Left ventricle myocardium inferior (tissue), 1 donor: ENCODE measurements at regions of chr1 and their contacts with region 1.

Region 1: GRCh38 chr1:245822987-245823386 is 668.2 kb downstream of the KIF26B start:
- DNase-seq: no peak
- H3K4me3 ChIP-seq: no peak overlapping the region
- H3K27ac ChIP-seq: no peak overlapping the region
- H3K4me1 ChIP-seq: no peaks in the 10 kb centered on the region
- H3K27me3 ChIP-seq: no peaks in the 10 kb centered on the region
- CTCF ChIP-seq: no peak

Region 2: GRCh38 chr1:245622332-245623023 is 200.5 kb before region 1 on chr1:
- intact Hi-C with region 1: no loop called
- DNase-seq: no peak
- H3K4me3 ChIP-seq: no peak overlapping the region
- H3K27ac ChIP-seq: no peak overlapping the region
- H3K4me1 ChIP-seq: no peaks in the 10 kb centered on the region
- H3K27me3 ChIP-seq: no peaks in the 10 kb centered on the region
- CTCF ChIP-seq: no peak

Region 3: GRCh38 chr1:246002725-246003441 is 179.9 kb after region 1 on chr1:
- intact Hi-C with region 1: loop called (anchors 10 kb)
- DNase-seq: peak; percentile 85
- H3K4me3 ChIP-seq: no peak overlapping the region
- H3K27ac ChIP-seq: no peak overlapping the region
- H3K4me1 ChIP-seq: no peaks in the 10 kb centered on the region
- H3K27me3 ChIP-seq: no peaks in the 10 kb centered on the region
- CTCF ChIP-seq: peak; percentile 88